ENCODE measurements at regions of chr12 and their contacts with region 1.

Region 1: DNA sequence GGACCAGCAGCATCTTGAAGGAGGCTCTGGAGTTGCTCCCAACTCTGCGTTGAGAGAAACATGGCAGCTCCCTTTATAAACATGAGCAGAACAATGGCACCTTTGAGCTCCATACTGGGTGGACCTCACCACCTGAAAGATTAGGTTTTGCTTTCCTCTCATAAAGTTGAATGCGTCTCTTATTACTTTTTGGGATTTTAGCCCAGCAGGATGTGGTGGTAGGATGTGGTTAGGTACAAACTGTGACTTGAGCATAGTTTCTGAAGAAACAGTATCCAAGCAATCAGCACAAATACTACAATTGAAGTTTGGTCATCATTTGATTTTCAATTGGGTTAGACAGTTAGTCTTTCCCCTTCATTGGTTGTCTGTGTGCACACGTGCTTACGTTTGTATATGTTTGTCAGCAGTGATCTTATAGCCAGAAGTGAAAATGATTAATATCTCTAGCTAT is at the start of gene PRR4:
- DNase-seq: peak; percentile 84
- ATAC-seq: peak; percentile 90
- H3K4me3 ChIP-seq: no peak within 1 kb of the TSS
- H3K27ac ChIP-seq: peak within 1 kb of the TSS; percentile 90
- H3K4me1 ChIP-seq: peaks cover 30% of the 10 kb centered on the region
- H3K27me3 ChIP-seq: no peaks in the 10 kb centered on the region
- CTCF ChIP-seq: no peak
- total RNA-seq, gene PRR4: 3.5 and 9.3 TPM in 2 replicates

Region 2: DNA sequence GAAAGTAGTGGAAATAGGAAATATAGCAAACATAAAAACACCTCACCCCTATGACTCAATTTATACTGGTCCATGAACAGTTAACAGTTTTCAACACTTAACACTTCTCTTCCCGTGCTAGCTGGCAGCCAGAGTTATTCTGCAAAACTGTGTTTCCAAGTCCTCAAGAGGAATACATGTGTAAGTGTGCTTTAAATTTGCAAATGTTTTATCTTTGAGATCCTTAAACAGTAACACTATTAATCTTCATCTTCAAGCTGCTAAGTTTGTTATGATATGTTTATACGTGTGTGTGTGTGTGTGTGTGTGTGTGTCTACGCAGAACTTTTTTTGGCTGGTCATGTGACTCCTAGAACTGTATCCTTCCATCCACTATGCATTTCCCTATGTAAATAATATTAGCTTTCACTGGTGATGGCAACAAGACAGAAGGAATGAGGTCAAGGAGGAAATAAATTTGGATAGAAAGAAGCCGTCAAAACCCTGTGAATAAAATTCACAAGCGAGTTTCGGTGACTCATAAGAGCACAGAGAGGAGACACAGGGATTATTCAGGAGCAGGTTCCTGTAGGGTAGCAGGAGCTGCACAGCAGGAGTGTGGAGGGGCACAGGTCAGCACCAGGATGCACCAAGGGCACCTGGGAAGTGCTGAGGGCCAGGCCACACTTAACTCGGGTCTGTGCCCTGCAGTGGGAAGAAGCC is 694.2 kb after region 1 on chr12:
- CTCF ChIA-PET with region 1: no interaction called
- POLR2A ChIA-PET with region 1: interaction called, 10 read pairs
- intact Hi-C with region 1: no loop called
- DNase-seq: peak; percentile 41
- ATAC-seq: peak; percentile 72
- H3K4me3 ChIP-seq: no peak overlapping the region
- H3K27ac ChIP-seq: no peak overlapping the region
- H3K4me1 ChIP-seq: peaks cover 14% of the 10 kb centered on the region
- H3K27me3 ChIP-seq: no peaks in the 10 kb centered on the region
- CTCF ChIP-seq: no peak

Measured in PC-3 (cell line).